CD14-positive monocyte (primary cell): ENCODE measurements at regions of chr19 and their contacts with region 1.

Region 1: DNA sequence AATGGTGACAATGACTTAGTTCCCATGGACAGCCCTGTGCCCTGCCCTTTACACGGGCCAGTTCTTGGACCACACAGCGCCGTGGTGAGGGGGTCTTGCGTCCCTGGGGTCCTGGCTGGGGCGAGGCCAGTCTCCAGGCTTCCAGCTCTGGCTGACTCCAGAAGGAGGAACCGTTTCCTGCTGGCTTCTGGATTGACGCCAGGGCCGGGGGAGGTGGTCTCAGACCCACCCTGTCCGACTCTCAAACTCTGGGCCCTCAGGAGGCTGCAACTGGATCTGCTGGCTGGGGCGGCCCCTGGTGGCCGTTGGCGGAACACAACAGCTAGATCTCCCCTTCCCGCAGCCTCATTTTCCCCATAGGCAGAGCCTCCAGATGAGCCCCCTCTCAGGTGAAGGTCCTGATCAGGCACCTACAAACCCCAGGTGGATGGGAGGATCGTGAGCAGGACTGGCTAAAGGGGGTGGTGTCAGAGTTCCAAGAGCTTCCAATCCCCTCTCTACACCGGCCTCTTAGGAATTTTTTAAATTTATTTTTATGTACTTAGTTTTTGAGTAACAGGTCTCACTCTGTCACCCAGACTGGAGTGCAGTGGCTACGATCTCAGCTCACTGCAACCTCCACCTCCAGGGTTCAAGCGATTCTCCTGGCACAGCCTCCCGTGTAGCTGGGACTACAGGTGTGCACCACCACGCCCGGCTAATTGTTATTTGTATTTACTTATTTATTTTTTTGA is 8.0 kb downstream of the CCDC194 start:
- DNase-seq: peak; percentile 34 to 63 (median 61)
- H3K4me3 ChIP-seq: no peak overlapping the region
- H3K4me3 Mint-ChIP-seq: no peak overlapping the region
- H3K27ac ChIP-seq: no peak overlapping the region
- H3K27ac Mint-ChIP-seq: peak overlapping the region in 1 of 7 donors; percentile 35
- H3K4me1 ChIP-seq: peaks cover 29 to 30% of the 10 kb centered on the region in 2 donors
- H3K4me1 Mint-ChIP-seq: peaks cover 18% of the 10 kb centered on the region
- H3K27me3 ChIP-seq: peaks cover 6 to 15% of the 10 kb centered on the region in 2 donors
- H3K27me3 Mint-ChIP-seq: peaks cover 15 to 24% (median 22%) of the 10 kb centered on the region in 3 donors
- CTCF ChIP-seq: peak; percentile 98

Region 2: DNA sequence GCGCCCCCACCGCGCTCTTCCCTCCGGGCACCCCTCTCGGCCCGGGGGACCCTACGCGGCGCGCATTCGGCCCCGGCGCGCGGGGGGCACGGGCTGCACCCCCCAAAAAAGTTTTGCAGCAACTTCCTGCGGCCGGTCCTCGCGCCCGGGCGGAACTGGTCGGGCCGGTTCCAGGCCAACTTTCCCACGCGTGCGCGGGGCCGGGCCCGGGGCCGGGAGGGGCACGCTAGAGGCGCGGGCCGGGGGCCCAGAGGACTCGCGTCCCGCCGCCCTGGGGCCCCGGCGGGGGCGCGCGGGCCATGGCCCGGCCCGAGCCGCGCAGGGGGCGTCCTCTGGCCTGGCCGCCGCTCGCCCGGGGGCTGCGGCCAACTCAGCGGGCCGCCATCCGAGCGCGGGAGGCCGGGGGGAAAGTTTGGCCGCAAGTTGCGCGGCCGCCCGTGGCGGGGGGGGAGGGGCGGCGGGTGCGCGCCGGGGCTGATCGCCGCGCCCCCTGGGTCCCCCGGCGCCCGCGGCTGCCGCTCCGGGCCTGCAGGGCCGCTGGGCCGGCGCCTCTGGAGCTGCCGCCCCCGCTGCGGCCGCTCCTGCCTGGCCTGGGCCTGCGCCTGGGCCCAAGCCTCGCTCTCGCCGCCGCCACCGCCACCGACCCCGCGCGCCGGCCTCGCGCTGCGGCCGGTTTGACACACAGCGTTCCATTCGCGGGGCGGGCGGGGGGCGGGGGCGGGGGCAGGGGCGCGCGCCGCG is 140.6 kb before region 1 on chr19 and contains the start of gene NR2F6:
- intact Hi-C with region 1: no loop called
- DNase-seq: no peak
- H3K4me3 ChIP-seq: peak within 1 kb of the TSS; percentile 61 to 86 (median 69)
- H3K4me3 Mint-ChIP-seq: peak within 1 kb of the TSS; percentile 95
- H3K27ac ChIP-seq: peak within 1 kb of the TSS; percentile 16 to 58
- H3K27ac Mint-ChIP-seq: peak within 1 kb of the TSS; percentile 69 to 95 (median 86)
- H3K4me1 ChIP-seq: peaks cover 20 to 32% of the 10 kb centered on the region in 2 donors
- H3K4me1 Mint-ChIP-seq: peaks cover 26% of the 10 kb centered on the region
- H3K27me3 ChIP-seq: peaks cover 0 to 7% of the 10 kb centered on the region in 2 donors
- H3K27me3 Mint-ChIP-seq: peaks cover 11 to 21% (median 19%) of the 10 kb centered on the region in 3 donors
- CTCF ChIP-seq: no peak
- polyA plus RNA-seq, gene NR2F6: 0.87 to 5.1 (median 1.7) TPM

Region 3: GRCh38 chr19:17292286-17293097 is 93.6 kb before region 1 on chr19:
- intact Hi-C with region 1: loop called (anchors 5 to 10 kb)
- DNase-seq: peak; percentile 74 to 78 (median 76)
- H3K4me3 ChIP-seq: peak overlapping the region; percentile 51 to 89 (median 61)
- H3K4me3 Mint-ChIP-seq: peak overlapping the region; percentile 81 to 89
- H3K27ac ChIP-seq: peak overlapping the region in 1 of 2 donors; percentile 61
- H3K27ac Mint-ChIP-seq: peak overlapping the region; percentile 46 to 84 (median 76)
- H3K4me1 ChIP-seq: peaks cover 12 to 15% of the 10 kb centered on the region in 2 donors
- H3K4me1 Mint-ChIP-seq: peaks cover 9% of the 10 kb centered on the region
- H3K27me3 ChIP-seq: no peaks in the 10 kb centered on the region
- H3K27me3 Mint-ChIP-seq: peaks cover 0 to 10% (median 0%) of the 10 kb centered on the region in 3 donors
- CTCF ChIP-seq: peak; percentile 85

Region 4: DNA sequence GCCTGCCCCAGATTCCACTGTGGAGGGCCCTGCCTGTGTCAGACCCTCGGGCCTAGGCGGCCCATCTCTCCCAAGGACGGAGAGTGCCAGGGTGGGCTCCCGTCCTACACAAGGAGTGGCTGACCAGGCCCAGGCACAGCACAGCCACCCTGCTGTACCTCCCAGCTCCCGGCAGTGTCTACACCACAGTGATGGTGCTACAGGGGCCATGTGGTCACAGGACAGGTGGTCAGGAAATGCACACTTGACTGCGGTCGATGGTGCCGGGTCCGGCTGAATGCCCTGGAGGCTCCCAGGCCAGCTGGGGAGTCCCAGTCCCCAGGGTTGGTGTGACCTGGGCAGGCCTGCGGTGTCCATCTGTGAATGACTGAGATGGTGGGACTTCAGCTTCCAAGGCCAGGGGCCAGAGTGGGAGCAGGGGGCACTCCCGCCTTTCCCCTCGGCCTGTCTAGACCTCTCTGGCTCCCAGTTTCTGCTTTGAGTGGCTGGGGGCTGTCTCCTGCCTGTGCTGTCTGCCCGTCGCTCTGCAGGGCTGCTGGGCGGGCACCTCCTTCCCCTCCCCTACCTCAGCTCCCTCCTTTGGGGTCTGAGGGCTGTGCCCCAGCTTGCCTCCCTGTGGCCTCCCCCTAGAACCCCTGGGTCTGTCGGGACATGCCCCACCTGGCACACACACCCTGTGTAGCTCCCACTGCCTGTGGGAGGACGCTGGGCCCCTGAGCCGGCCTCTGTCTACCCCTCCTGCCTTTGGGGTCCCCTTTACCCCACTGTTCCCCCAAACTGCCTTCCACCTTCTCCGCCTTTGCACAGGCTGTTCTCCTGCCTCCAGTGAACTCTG is 64.2 kb before region 1 on chr19:
- intact Hi-C with region 1: no loop called
- DNase-seq: peak in 1 of 3 donors; percentile 2
- H3K4me3 ChIP-seq: no peak overlapping the region
- H3K4me3 Mint-ChIP-seq: no peak overlapping the region
- H3K27ac ChIP-seq: no peak overlapping the region
- H3K27ac Mint-ChIP-seq: peak overlapping the region in 1 of 7 donors; percentile 68
- H3K4me1 ChIP-seq: peaks cover 12 to 17% of the 10 kb centered on the region in 2 donors
- H3K4me1 Mint-ChIP-seq: peaks cover 14% of the 10 kb centered on the region
- H3K27me3 ChIP-seq: peaks cover 0 to 2% of the 10 kb centered on the region in 2 donors
- H3K27me3 Mint-ChIP-seq: peaks cover 3 to 20% (median 10%) of the 10 kb centered on the region in 3 donors
- CTCF ChIP-seq: no peak

Region 5: GRCh38 chr19:17346109-17346671 is 39.9 kb before region 1 on chr19:
- intact Hi-C with region 1: loop called (anchors 1 to 5 kb)
- DNase-seq: peak; percentile 55 to 72 (median 66)
- H3K4me3 ChIP-seq: no peak overlapping the region
- H3K4me3 Mint-ChIP-seq: no peak overlapping the region
- H3K27ac ChIP-seq: no peak overlapping the region
- H3K27ac Mint-ChIP-seq: peak overlapping the region in 1 of 7 donors; percentile 58
- H3K4me1 ChIP-seq: peaks cover 4 to 5% of the 10 kb centered on the region in 2 donors
- H3K4me1 Mint-ChIP-seq: peaks cover 9% of the 10 kb centered on the region
- H3K27me3 ChIP-seq: peaks cover 0 to 19% of the 10 kb centered on the region in 2 donors
- H3K27me3 Mint-ChIP-seq: peaks cover 15 to 39% (median 30%) of the 10 kb centered on the region in 3 donors
- CTCF ChIP-seq: peak; percentile 98